Activated CD4-positive, alpha-beta T cell treated with anti-CD3 and anti-CD28 coated beads for 36 hours (primary cell): ENCODE measurements at regions of chr19 and their contacts with region 1.

Region 1: GRCh38 chr19:34926685-34927375 is at the start of gene ZNF30:
- DNase-seq: peak; percentile 92
- ATAC-seq: peak; percentile 100
- H3K4me3 Mint-ChIP-seq: peak within 1 kb of the TSS; percentile 93
- H3K27ac Mint-ChIP-seq: peak within 1 kb of the TSS; percentile 77
- H3K4me1 Mint-ChIP-seq: peaks cover 12% of the 10 kb centered on the region
- H3K27me3 Mint-ChIP-seq: no peaks in the 10 kb centered on the region
- total RNA-seq, gene ZNF30: 5.7 to 6.2 TPM

Region 2: GRCh38 chr19:34662919-34663318 is 263.9 kb before region 1 on chr19:
- CTCF ChIA-PET with region 1: no interaction called
- POLR2A ChIA-PET with region 1: no interaction called
- intact Hi-C with region 1: no loop called
- DNase-seq: peak; percentile 71
- ATAC-seq: peak; percentile 99
- H3K4me3 Mint-ChIP-seq: no peak overlapping the region
- H3K27ac Mint-ChIP-seq: peak overlapping the region; percentile 21
- H3K4me1 Mint-ChIP-seq: peaks cover 22% of the 10 kb centered on the region
- H3K27me3 Mint-ChIP-seq: peaks cover 3% of the 10 kb centered on the region

Region 3: GRCh38 chr19:34772697-34773554 is 153.9 kb before region 1 on chr19 and contains the start of gene ZNF599:
- CTCF ChIA-PET with region 1: no interaction called
- POLR2A ChIA-PET with region 1: no interaction called
- intact Hi-C with region 1: loop called in 1 of 2 experiments (anchors 1 kb)
- DNase-seq: peak; percentile 94
- ATAC-seq: peak; percentile 97
- H3K4me3 Mint-ChIP-seq: peak within 1 kb of the TSS; percentile 83
- H3K27ac Mint-ChIP-seq: peak within 1 kb of the TSS; percentile 86
- H3K4me1 Mint-ChIP-seq: peaks cover 11% of the 10 kb centered on the region
- H3K27me3 Mint-ChIP-seq: peaks cover 9% of the 10 kb centered on the region
- total RNA-seq, gene ZNF599: 3.5 to 3.7 TPM

Region 4: GRCh38 chr19:34963573-34964409 is 37.0 kb after region 1 on chr19 and contains the start of gene ZNF792:
- CTCF ChIA-PET with region 1: no interaction called
- POLR2A ChIA-PET with region 1: no interaction called
- intact Hi-C with region 1: loop called in 1 of 2 experiments (anchors 2 kb)
- DNase-seq: peak; percentile 67
- ATAC-seq: peak; percentile 79
- H3K4me3 Mint-ChIP-seq: peak within 1 kb of the TSS; percentile 76
- H3K27ac Mint-ChIP-seq: peak within 1 kb of the TSS; percentile 64
- H3K4me1 Mint-ChIP-seq: peaks cover 24% of the 10 kb centered on the region
- H3K27me3 Mint-ChIP-seq: no peaks in the 10 kb centered on the region
- total RNA-seq, gene ZNF792: 5.6 to 5.7 TPM